ENCODE measurements at regions of chr12 and their contacts with region 1.

Region 1: GRCh38 chr12:27332407-27333301 is at the start of gene BMAL2:
- DNase-seq: peak; percentile 86
- H3K4me3 Mint-ChIP-seq: peak within 1 kb of the TSS; percentile 97
- H3K27ac Mint-ChIP-seq: peak within 1 kb of the TSS; percentile 98
- H3K4me1 Mint-ChIP-seq: peaks cover 58% of the 10 kb centered on the region
- H3K27me3 Mint-ChIP-seq: no peaks in the 10 kb centered on the region
- total RNA-seq, gene BMAL2: 55.9 and 58.8 TPM in 2 replicates

Region 2: GRCh38 chr12:26566675-26567074 is 766.0 kb before region 1 on chr12:
- intact Hi-C with region 1: no loop called
- DNase-seq: no peak
- H3K4me3 Mint-ChIP-seq: no peak overlapping the region
- H3K27ac Mint-ChIP-seq: no peak overlapping the region
- H3K4me1 Mint-ChIP-seq: no peaks in the 10 kb centered on the region
- H3K27me3 Mint-ChIP-seq: peaks cover 2% of the 10 kb centered on the region

Region 3: GRCh38 chr12:26937875-26938700 is 394.6 kb before region 1 on chr12 and contains the starts of genes FGFR1OP2 and INTS13:
- intact Hi-C with region 1: loop called (anchors 2 kb)
- DNase-seq: peak; percentile 99
- H3K4me3 Mint-ChIP-seq: peak within 1 kb of the TSS; percentile 94
- H3K27ac Mint-ChIP-seq: peak within 1 kb of the TSS; percentile 97
- H3K4me1 Mint-ChIP-seq: peaks cover 55% of the 10 kb centered on the region
- H3K27me3 Mint-ChIP-seq: no peaks in the 10 kb centered on the region
- total RNA-seq, gene FGFR1OP2: 45.7 and 46.7 TPM in 2 replicates
- total RNA-seq, gene INTS13: 49.7 and 51.3 TPM in 2 replicates

Region 4: DNA sequence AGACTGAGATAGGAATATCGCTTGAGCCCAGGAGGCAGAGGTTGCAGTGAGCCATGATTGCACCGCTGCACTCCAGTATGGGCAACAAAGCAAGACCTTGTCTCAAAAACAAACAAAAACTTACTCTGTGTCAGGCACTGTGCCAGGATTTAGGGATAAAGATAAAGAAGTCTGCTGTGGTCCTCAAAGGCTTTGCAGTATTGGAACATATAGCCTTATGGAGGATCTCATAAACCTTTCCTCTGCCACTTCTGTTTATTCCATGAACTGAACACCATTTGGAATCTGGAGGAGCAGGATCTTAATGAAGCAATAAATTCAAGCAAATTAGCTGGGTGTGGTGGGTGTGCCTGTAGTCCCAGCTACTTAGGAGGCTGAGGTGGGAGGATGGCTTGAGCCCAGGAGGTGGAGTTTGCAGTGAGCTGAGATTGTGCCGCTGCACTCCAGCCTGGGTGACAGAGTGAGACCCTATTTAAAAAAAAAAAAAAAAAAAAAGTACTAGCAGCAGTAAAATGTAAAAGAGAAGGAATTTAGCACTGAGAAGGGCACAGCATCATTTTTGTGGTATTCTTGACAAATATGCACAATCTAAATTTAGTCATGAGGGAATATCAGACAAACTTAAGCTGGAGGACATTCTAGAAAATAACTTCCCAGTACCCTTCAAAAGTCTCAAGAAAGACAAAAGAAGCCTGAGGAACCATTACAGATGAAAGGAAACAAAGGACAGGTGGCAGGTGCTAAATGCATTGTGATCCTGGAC is 27.1 kb after region 1 on chr12:
- intact Hi-C with region 1: no loop called
- DNase-seq: no peak
- H3K4me3 Mint-ChIP-seq: no peak overlapping the region
- H3K27ac Mint-ChIP-seq: no peak overlapping the region
- H3K4me1 Mint-ChIP-seq: peaks cover 16% of the 10 kb centered on the region
- H3K27me3 Mint-ChIP-seq: peaks cover 12% of the 10 kb centered on the region

Region 5: GRCh38 chr12:27383429-27384260 is 51.0 kb after region 1 on chr12:
- intact Hi-C with region 1: loop called (anchors 5 kb)
- DNase-seq: peak; percentile 90
- H3K4me3 Mint-ChIP-seq: no peak overlapping the region
- H3K27ac Mint-ChIP-seq: no peak overlapping the region
- H3K4me1 Mint-ChIP-seq: peaks cover 2% of the 10 kb centered on the region
- H3K27me3 Mint-ChIP-seq: no peaks in the 10 kb centered on the region

Region 6: GRCh38 chr12:27523642-27524493 is 191.2 kb after region 1 on chr12 and contains the start of gene PPFIBP1:
- intact Hi-C with region 1: loop called (anchors 5 kb)
- DNase-seq: peak; percentile 96
- H3K4me3 Mint-ChIP-seq: peak within 1 kb of the TSS; percentile 96
- H3K27ac Mint-ChIP-seq: peak within 1 kb of the TSS; percentile 91
- H3K4me1 Mint-ChIP-seq: peaks cover 34% of the 10 kb centered on the region
- H3K27me3 Mint-ChIP-seq: peaks cover 42% of the 10 kb centered on the region
- total RNA-seq, gene PPFIBP1: 29.0 and 32.0 TPM in 2 replicates

Region 7: DNA sequence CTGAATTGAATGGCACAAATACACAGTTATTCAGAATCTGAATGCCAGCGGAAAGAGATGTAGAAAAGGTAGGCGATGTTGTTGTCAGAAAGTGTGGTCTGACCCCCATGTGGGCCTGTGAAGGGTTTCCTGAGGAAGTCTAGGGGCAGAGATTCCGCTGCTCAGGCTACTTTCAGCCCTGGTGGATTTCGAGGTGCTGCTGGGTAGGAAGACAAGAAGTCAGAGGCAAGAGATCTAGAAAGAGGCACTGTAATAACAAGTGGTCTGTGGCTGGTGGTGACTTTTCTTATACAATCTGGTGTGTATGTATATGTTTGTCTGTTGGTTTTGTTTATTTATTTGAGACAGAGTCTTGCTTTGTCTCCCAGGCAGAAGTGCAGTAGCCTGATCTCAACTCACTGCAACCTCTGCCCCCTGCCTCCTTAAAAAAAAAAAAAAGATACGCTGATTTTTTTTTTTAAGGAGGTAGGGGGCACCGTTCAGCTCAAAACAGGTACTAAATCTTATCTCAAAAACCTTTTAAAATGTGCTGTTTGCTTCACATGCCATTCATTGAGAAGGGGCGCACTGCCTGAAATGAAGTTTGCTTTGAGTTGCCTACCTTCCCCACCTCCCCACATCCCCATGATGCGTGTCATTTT is 474.5 kb after region 1 on chr12:
- intact Hi-C with region 1: loop called (anchors 5 kb)
- DNase-seq: peak; percentile 65
- H3K4me3 Mint-ChIP-seq: peak overlapping the region; percentile 3
- H3K27ac Mint-ChIP-seq: peak overlapping the region; percentile 43
- H3K4me1 Mint-ChIP-seq: peaks cover 17% of the 10 kb centered on the region
- H3K27me3 Mint-ChIP-seq: peaks cover 10% of the 10 kb centered on the region